ENCODE measurements at regions of chr17 and their contacts with region 1.

Region 1: DNA sequence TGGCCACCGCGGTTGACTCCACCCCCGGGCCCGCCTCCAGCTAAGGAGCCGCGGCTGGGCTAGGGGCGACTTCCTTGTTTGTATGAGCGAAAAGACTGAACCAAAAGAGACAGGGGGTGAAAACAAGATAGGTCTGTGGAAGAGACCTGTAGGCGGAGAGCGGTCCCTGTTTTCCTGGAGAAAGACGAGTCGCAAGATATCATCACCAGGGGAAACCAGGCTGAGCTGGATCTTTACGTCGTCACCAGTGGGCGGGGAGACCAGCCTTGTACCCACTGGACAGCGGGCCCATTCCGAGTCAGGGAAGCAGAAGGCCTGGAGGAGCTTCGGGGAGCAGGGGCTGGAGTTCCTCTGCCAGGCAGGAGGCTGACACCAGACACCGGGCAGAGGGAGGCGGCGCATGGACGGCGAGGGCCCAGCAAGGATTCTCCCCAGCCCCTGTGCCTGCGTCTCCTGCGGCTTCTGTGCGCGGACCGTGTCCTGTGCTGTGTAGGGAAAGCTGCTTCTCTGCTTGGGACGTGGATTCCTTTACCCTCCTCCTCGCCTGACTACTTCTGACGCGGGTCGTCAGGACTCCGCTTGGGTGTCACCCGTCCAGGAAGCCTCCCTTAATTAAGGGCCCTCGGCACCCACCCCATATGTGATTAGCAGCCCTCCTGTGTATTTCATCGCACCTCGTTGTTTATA is 10.3 kb upstream of the ARL4D start:
- DNase-seq: peak; percentile 82

Region 2: GRCh38 chr17:43360739-43361505 is 27.6 kb before region 1 on chr17:
- CTCF ChIA-PET with region 1: no interaction called
- POLR2A ChIA-PET with region 1: no interaction called
- DNase-seq: no peak

Region 3: GRCh38 chr17:43377056-43377810 is 11.3 kb before region 1 on chr17:
- CTCF ChIA-PET with region 1: interaction called, 4 read pairs
- POLR2A ChIA-PET with region 1: interaction called, 11 read pairs
- DNase-seq: no peak

Region 4: GRCh38 chr17:43483674-43484372 is 95.3 kb after region 1 on chr17 and contains the start of gene DHX8:
- CTCF ChIA-PET with region 1: interaction called, 103 read pairs
- POLR2A ChIA-PET with region 1: interaction called, 75 read pairs
- DNase-seq: peak; percentile 91

Region 5: DNA sequence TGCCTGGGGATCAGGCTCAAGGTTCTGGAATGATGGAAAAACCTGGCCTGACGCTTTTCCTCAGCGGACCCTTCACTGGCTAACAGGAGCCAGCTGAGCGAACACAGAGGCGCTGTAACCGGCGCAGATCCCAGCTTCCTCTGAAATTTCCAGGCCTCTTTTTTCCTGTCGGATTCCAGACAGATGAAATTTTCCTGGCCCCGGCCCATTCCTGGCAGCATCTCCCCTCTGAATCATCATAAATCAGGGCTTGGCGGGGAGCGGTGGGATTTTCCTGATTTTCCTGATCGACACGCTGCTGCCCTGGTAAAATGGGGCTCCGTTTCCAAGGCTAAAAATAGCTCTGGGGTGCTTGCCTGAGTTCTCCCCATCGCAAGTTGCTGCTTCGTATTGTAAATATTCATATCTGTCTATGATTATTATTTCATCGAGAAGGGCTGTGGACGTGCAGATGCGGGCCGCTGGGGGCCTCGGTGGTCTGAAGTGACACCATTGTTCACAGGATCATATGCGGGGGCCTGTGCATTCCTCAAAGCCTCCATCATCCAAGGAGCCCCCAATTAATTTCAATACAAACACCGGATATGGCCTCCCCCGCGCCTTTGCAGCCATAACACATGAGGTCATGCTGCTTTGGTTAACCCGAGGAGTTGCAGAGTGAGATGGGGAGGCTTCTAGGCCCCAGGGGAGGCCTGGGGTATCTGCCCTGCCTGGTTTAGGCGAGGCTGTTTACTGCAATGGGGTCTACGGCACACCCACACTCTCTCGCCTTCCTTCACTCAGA is 203.5 kb after region 1 on chr17:
- CTCF ChIA-PET with region 1: no interaction called
- POLR2A ChIA-PET with region 1: no interaction called
- DNase-seq: no peak

Measured in HEK293T (cell line).